ENCODE measurements at regions of chr9 and their contacts with region 1.

Region 1: DNA sequence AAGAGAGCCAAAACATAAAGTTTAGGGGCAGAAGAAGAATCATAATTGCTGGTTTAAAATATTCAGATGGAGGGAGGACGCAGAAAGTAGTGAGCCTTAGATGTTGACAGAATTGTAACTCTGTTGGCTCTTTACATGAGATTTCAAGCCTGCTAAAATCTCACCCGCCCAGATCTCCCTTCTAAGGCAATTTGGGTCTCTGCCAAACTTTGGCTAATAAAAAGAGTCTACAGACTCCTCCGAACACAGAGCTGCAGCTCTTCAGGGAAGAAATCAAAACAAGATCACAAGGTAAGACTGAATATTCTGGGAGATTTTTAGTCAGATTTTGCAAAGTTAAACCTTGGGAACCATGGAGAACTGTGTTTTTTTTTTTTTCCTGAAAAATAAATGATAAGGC is at the start of gene IL33:
- DNase-seq: peak; percentile 73
- H3K4me3 ChIP-seq: peak within 1 kb of the TSS; percentile 21 to 51 (median 42)
- H3K27ac ChIP-seq: peak within 1 kb of the TSS; percentile 73 to 87 (median 78)
- H3K4me1 ChIP-seq: peaks cover 0 to 39% (median 30%) of the 10 kb centered on the region in 4 donors
- H3K27me3 ChIP-seq: no peaks in the 10 kb centered on the region
- CTCF ChIP-seq: no peak
- EP300 ChIP-seq: no peak
- POLR2A ChIP-seq: no peak
- total RNA-seq, gene IL33: 33.5 to 73.2 (median 45.8) TPM

Region 2: DNA sequence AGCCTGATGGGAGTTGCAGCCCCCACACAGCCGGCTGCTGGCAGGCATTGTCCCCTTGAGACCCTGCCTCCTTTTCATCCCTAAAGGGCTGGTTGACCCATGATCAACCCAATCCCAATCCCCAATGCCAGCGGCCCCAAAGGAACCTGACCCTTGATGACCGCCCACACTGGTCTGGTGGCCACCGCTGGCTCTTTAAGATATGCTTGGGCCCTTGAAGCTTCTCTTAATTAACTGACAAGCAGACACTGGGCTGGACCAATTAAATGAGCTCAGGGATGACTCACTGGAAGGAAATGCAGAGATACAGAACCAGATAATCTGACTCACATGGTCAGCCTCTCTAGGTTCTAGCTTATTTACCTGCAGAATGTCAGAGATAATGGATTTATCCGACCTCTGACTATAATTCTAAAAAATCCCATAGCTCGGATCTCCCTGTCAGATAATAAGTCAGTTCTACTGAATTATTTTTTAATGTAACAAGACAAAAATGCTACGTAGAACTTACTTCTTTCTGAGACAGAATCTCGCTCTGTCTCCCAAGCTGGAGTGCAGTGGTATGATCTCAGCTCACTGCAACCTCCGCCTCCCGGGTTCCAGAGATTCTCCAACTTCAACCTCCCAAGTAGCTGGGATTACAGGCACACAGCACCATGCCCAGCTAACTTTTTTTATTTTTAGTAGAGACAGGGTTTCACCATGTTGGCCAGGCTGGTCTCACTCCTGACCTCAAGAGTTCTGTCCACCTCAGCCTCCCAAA is 336.0 kb before region 1 on chr9:
- intact Hi-C with region 1: loop called (anchors 5 kb)
- DNase-seq: no peak
- H3K4me3 ChIP-seq: no peak overlapping the region
- H3K27ac ChIP-seq: no peak overlapping the region
- H3K4me1 ChIP-seq: no peaks in the 10 kb centered on the region
- H3K27me3 ChIP-seq: no peaks in the 10 kb centered on the region
- CTCF ChIP-seq: no peak
- EP300 ChIP-seq: no peak
- POLR2A ChIP-seq: no peak

Region 3: DNA sequence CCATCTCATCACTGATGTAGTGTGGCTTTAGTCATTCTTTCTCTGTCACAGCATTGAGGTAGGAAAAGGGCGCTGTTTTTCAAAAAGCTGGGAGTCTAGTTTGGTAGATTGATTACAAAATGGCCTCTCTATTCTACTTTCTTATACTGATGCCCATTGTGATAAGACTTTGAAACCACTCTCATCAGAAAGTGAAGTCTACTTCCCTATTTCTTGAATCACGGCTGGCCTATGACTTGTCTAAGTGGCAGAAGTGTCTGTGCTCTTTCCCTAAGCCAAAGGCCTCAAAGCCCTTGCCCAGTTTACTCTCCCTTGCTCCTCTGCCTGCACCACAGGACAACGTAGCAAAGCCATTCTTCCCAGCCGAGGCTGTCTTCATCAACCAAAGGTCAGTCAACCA is 82.9 kb before region 1 on chr9:
- intact Hi-C with region 1: no loop called
- DNase-seq: no peak
- H3K4me3 ChIP-seq: no peak overlapping the region
- H3K27ac ChIP-seq: no peak overlapping the region
- H3K4me1 ChIP-seq: no peaks in the 10 kb centered on the region
- H3K27me3 ChIP-seq: no peaks in the 10 kb centered on the region
- CTCF ChIP-seq: no peak
- EP300 ChIP-seq: no peak
- POLR2A ChIP-seq: no peak

Region 4: DNA sequence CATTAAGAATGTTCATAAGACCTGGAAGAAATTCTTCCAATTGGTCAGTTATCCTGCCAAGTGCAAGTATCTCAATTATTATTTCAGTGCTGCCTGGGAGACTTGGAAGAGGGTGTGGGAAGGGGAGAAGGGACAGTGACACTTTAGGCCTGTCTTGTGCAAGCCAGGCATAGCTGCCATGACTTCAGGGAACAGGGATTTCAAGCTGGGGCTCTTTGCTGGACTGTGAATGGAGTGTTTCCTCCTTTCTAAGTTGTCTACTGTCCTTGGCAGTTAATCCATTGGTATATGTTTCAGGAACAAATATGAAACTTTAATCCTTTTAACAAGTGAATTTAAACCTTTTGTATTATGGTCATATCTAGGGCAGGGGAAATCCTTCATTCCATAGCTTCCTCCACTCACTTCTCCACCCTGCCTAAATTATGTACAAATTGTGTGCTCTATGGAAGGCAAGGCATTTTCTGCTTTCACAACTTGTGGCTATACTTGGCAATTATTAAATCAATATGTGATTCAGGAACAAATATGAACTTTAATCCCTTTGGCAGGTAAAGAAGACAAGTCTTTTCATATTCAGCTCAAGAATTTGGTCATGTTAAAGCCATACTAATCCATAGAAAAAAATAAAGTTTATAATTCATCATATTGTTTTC is 72.6 kb before region 1 on chr9:
- intact Hi-C with region 1: no loop called
- DNase-seq: no peak
- H3K4me3 ChIP-seq: no peak overlapping the region
- H3K27ac ChIP-seq: no peak overlapping the region
- H3K4me1 ChIP-seq: no peaks in the 10 kb centered on the region
- H3K27me3 ChIP-seq: no peaks in the 10 kb centered on the region
- CTCF ChIP-seq: no peak
- EP300 ChIP-seq: no peak
- POLR2A ChIP-seq: no peak

Region 5: GRCh38 chr9:6272229-6272598 is 56.7 kb after region 1 on chr9:
- intact Hi-C with region 1: loop called (anchors 5 kb)
- DNase-seq: no peak
- H3K4me3 ChIP-seq: no peak overlapping the region
- H3K27ac ChIP-seq: peak overlapping the region; percentile 12 to 75 (median 52)
- H3K4me1 ChIP-seq: peaks cover 0 to 17% (median 5%) of the 10 kb centered on the region in 4 donors
- H3K27me3 ChIP-seq: no peaks in the 10 kb centered on the region
- CTCF ChIP-seq: no peak
- EP300 ChIP-seq: no peak
- POLR2A ChIP-seq: no peak

Region 6: GRCh38 chr9:6330958-6331634 is 115.5 kb after region 1 on chr9:
- intact Hi-C with region 1: no loop called
- DNase-seq: no peak
- H3K4me3 ChIP-seq: no peak overlapping the region
- H3K27ac ChIP-seq: no peak overlapping the region
- H3K4me1 ChIP-seq: no peaks in the 10 kb centered on the region
- H3K27me3 ChIP-seq: no peaks in the 10 kb centered on the region
- CTCF ChIP-seq: no peak
- EP300 ChIP-seq: no peak
- POLR2A ChIP-seq: no peak

Measured in sigmoid colon (tissue), 7 donors.